ENCODE measurements at regions of chr20 and their contacts with region 1.

Region 1: GRCh38 chr20:46099491-46100287 is 9.9 kb upstream of the NCOA5 start:
- DNase-seq: peak; percentile 76
- ATAC-seq: peak; percentile 98
- H3K4me3 Mint-ChIP-seq: peak overlapping the region; percentile 37
- H3K27ac Mint-ChIP-seq: no peak overlapping the region
- H3K4me1 Mint-ChIP-seq: peaks cover 6% of the 10 kb centered on the region
- H3K27me3 Mint-ChIP-seq: peaks cover 52% of the 10 kb centered on the region
- CTCF ChIP-seq: no peak

Region 2: GRCh38 chr20:46117704-46118467 is 18.2 kb after region 1 on chr20 and contains the start of gene CD40:
- CTCF ChIA-PET with region 1: interaction called, 10 read pairs
- POLR2A ChIA-PET with region 1: no interaction called
- DNase-seq: peak; percentile 95
- ATAC-seq: peak; percentile 95
- H3K4me3 Mint-ChIP-seq: peak within 1 kb of the TSS; percentile 99
- H3K27ac Mint-ChIP-seq: peak within 1 kb of the TSS; percentile 98
- H3K4me1 Mint-ChIP-seq: peaks cover 7% of the 10 kb centered on the region
- H3K27me3 Mint-ChIP-seq: peaks cover 49% of the 10 kb centered on the region
- CTCF ChIP-seq: no peak
- total RNA-seq, gene CD40: 12.9 to 15.3 TPM (median 14.8 TPM) in 3 replicates

Region 3: DNA sequence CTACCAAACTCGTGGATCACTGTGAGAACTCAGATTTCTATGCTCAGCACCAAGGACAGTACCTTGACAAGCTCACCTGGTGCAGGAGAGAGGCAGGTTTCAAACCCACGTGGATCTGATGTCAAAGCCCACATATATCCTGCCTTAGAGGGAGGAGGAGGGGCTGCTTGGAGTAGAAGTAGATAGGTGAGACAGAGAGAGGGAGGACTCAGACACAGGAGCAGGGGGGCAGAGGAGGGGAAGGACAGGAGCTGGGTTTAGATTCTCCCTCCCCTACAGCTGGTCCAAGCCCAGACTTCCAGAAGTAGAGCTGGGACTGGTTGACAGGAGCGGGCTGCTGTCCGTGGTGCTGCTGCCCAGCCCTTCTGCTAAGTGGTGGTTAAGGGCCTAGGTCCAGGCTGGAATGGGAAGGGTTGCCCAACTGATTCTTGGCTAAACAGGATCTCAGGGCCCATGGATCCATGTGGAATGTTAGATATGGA is 131.2 kb after region 1 on chr20:
- CTCF ChIA-PET with region 1: no interaction called
- POLR2A ChIA-PET with region 1: no interaction called
- DNase-seq: peak; percentile 84
- ATAC-seq: peak; percentile 87
- H3K4me3 Mint-ChIP-seq: no peak overlapping the region
- H3K27ac Mint-ChIP-seq: no peak overlapping the region
- H3K4me1 Mint-ChIP-seq: peaks cover 9% of the 10 kb centered on the region
- H3K27me3 Mint-ChIP-seq: peaks cover 6% of the 10 kb centered on the region
- CTCF ChIP-seq: no peak

Measured in WTC11 (cell line).